T-cell (primary cell): ENCODE measurements at regions of chr1 and their contacts with region 1.

Region 1: DNA sequence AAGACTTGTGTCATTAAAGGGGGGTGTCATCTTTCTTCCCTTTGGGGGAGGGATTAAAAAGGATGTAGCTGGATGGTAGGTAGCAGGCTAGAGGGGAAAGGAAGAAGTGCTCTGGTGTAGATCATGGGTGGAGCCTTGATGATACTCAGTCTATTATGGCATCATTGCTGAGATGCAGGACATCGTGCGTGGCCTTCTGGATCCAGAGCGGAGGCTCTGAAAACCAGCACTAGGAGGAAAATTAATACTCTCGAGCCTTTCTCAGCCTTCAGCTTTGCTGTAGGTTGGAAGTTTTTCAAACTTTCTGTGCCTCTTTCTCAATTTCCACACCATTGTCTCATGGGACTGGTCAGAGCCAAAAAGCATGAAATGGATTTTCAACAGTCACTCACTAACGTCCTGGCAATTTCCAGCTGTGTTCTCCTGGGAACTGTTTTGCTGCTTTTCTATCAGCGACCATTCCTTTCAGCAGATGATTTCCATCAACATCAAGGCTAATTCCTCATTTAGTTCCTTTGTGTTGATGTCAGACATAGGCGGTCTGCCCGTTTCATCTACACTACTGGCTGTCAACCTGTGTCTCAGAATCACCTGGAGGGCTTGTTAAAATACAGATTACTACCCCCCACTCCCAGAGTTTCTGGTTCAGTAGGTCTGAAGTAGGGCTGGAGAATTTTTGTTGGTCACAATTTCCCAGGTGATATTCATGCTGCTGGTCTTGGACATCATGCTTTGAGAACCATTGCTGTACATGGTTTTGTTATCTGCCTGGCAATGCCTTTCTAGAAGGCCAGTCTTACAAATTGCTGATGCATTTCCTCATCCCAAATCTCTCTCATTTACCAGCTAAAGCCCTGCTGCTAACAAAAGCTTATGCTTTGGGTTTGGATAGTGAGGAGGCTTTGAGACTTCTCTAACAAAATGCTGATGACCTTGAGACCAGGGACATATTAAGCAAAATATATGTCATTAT is 7.7 kb downstream of the CACNA1E start:
- DNase-seq: no peak
- ATAC-seq: no peak
- H3K4me3 ChIP-seq: no peak overlapping the region
- H3K4me3 Mint-ChIP-seq: no peak overlapping the region
- H3K27ac ChIP-seq: no peak overlapping the region
- H3K27ac Mint-ChIP-seq: no peak overlapping the region
- H3K4me1 ChIP-seq: peaks cover 0 to 2% of the 10 kb centered on the region in 2 experiments
- H3K4me1 Mint-ChIP-seq: peaks cover 4 to 6% (median 4%) of the 10 kb centered on the region in 3 donors
- H3K27me3 ChIP-seq: peaks cover 4 to 6% of the 10 kb centered on the region in 2 experiments
- H3K27me3 Mint-ChIP-seq: peaks cover 53 to 64% of the 10 kb centered on the region in 2 donors

Region 2: GRCh38 chr1:181577475-181577874 is 86.4 kb after region 1 on chr1:
- CTCF ChIA-PET with region 1: no interaction called
- POLR2A ChIA-PET with region 1: no interaction called
- DNase-seq: no peak
- ATAC-seq: no peak
- H3K4me3 ChIP-seq: no peak overlapping the region
- H3K4me3 Mint-ChIP-seq: no peak overlapping the region
- H3K27ac ChIP-seq: no peak overlapping the region
- H3K27ac Mint-ChIP-seq: no peak overlapping the region
- H3K4me1 ChIP-seq: no peaks in the 10 kb centered on the region
- H3K4me1 Mint-ChIP-seq: no peaks in the 10 kb centered on the region
- H3K27me3 ChIP-seq: peaks cover 0 to 8% of the 10 kb centered on the region in 2 experiments
- H3K27me3 Mint-ChIP-seq: peaks cover 17 to 19% of the 10 kb centered on the region in 2 donors

Region 3: GRCh38 chr1:181893937-181894336 is 402.9 kb after region 1 on chr1:
- CTCF ChIA-PET with region 1: no interaction called
- POLR2A ChIA-PET with region 1: interaction called in 1 of 2 experiments, 15 read pairs
- DNase-seq: no peak
- ATAC-seq: no peak
- H3K4me3 ChIP-seq: no peak overlapping the region
- H3K4me3 Mint-ChIP-seq: no peak overlapping the region
- H3K27ac ChIP-seq: no peak overlapping the region
- H3K27ac Mint-ChIP-seq: no peak overlapping the region
- H3K4me1 ChIP-seq: no peaks in the 10 kb centered on the region
- H3K4me1 Mint-ChIP-seq: no peaks in the 10 kb centered on the region
- H3K27me3 ChIP-seq: peaks cover 1 to 2% of the 10 kb centered on the region in 2 experiments
- H3K27me3 Mint-ChIP-seq: peaks cover 4 to 15% of the 10 kb centered on the region in 2 donors